Ovary (tissue), 10 donors: ENCODE measurements at regions of chr1 and their contacts with region 1.

Region 1: GRCh38 chr1:206503591-206504362 is 3.6 kb upstream of the RASSF5 start:
- DNase-seq: no peak
- H3K4me3 ChIP-seq: no peak overlapping the region
- H3K27ac ChIP-seq: no peak overlapping the region
- H3K4me1 ChIP-seq: peaks cover 5% of the 10 kb centered on the region
- H3K27me3 ChIP-seq: no peaks in the 10 kb centered on the region
- CTCF ChIP-seq: no peak
- EP300 ChIP-seq: no peak
- POLR2A ChIP-seq: no peak

Region 2: DNA sequence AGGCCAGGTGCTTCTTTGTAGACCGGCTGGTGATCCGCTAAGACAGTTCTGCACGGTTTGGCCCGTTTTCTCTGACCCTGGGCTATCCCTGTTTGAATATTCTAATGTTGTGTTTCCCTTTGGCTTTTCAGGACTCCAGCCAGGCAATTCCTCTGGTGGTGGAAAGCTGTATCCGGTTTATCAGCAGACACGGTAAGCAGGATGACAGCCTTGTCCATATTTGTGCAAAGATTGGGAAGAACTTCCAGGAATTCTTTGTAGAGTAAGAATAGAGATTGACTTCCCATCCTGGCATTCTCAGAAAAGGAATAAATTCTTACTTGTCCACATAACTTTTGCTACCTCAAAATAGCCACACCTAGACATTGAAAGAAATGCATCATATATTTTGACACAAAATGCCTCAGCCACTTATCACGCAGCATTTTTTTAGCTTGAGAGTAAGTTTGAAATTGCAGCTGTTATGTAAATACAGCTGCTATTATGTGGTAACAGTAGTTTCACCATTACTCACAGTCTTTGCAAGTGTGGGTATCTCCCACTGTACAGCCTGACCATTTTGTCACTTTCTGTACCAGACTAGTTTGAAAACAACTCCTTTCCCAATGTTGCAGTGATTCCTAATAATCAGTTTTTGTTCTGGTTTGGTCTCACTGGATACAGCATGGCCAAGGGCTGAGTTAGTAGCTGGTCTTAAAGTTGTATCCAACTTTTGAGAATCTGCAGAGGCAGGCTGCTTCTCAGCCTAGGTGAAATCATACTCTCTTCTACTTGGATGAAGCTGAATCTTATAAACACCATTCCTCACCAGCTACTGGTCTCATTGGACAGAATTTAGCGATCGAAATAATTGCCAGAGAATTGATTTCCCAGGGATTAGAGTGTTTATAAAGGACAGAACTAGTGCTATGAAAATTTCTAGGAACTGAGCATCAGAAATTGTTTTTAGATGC is 73.5 kb before region 1 on chr1:
- intact Hi-C with region 1: no loop called
- DNase-seq: peak in 4 of 5 donors; percentile 25 to 59 (median 40)
- H3K4me3 ChIP-seq: no peak overlapping the region
- H3K27ac ChIP-seq: no peak overlapping the region
- H3K4me1 ChIP-seq: peaks cover 13% of the 10 kb centered on the region
- H3K27me3 ChIP-seq: no peaks in the 10 kb centered on the region
- CTCF ChIP-seq: peak in 1 of 3 donors; percentile 21
- EP300 ChIP-seq: no peak
- POLR2A ChIP-seq: no peak

Region 3: GRCh38 chr1:206544562-206545257 is 40.9 kb after region 1 on chr1:
- intact Hi-C with region 1: loop called in 1 of 4 experiments (anchors 5 kb)
- DNase-seq: peak; percentile 55 to 80 (median 75)
- H3K4me3 ChIP-seq: no peak overlapping the region
- H3K27ac ChIP-seq: no peak overlapping the region
- H3K4me1 ChIP-seq: peaks cover 8% of the 10 kb centered on the region
- H3K27me3 ChIP-seq: no peaks in the 10 kb centered on the region
- CTCF ChIP-seq: peak; percentile 51 to 63 (median 52)
- EP300 ChIP-seq: no peak
- POLR2A ChIP-seq: no peak